MCF 10A (cell line): ENCODE measurements at regions of chr2 and their contacts with region 1.

Region 1: GRCh38 chr2:209977386-209978239 is 24.8 kb upstream of the RPE start:
- DNase-seq: peak; percentile 47
- H3K4me3 Mint-ChIP-seq: no peak overlapping the region
- H3K27ac Mint-ChIP-seq: no peak overlapping the region
- H3K4me1 Mint-ChIP-seq: no peaks in the 10 kb centered on the region
- H3K27me3 Mint-ChIP-seq: no peaks in the 10 kb centered on the region
- CTCF ChIP-seq: peak; percentile 39

Region 2: GRCh38 chr2:210072922-210073509 is 95.4 kb after region 1 on chr2:
- CTCF ChIA-PET with region 1: interaction called, 4 read pairs
- POLR2A ChIA-PET with region 1: no interaction called
- intact Hi-C with region 1: loop called (anchors 2 kb)
- DNase-seq: peak; percentile 57
- H3K4me3 Mint-ChIP-seq: no peak overlapping the region
- H3K27ac Mint-ChIP-seq: no peak overlapping the region
- H3K4me1 Mint-ChIP-seq: no peaks in the 10 kb centered on the region
- H3K27me3 Mint-ChIP-seq: no peaks in the 10 kb centered on the region
- CTCF ChIP-seq: peak; percentile 52

Region 3: DNA sequence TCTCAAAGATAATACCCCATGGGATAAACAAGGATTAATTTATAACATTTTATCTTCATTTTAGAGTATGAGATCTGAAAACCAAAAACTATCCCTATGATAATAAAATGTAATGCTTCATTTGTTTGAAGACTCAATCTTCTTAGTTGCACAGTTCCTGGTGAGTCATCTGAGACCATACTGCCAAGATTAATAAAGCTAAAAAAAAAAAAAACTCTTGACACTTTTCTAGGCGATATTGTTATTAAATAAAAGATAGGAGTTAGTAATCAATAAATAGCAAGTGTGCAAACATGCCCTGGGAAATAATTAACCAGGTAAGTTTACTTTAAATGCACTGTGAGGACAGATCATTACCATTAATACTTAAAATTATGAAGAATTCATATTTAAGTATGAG is 108.7 kb after region 1 on chr2:
- CTCF ChIA-PET with region 1: no interaction called
- POLR2A ChIA-PET with region 1: no interaction called
- intact Hi-C with region 1: no loop called
- DNase-seq: peak; percentile 28
- H3K4me3 Mint-ChIP-seq: no peak overlapping the region
- H3K27ac Mint-ChIP-seq: no peak overlapping the region
- H3K4me1 Mint-ChIP-seq: no peaks in the 10 kb centered on the region
- H3K27me3 Mint-ChIP-seq: no peaks in the 10 kb centered on the region
- CTCF ChIP-seq: no peak